Spleen (tissue), 13 donors: ENCODE measurements at regions of chr2 and their contacts with region 1.

Region 1: GRCh38 chr2:177296040-177296439 is 31.5 kb upstream of the NFE2L2 start:
- DNase-seq: no peak
- H3K4me3 ChIP-seq: no peak overlapping the region
- H3K27ac ChIP-seq: no peak overlapping the region
- H3K4me1 ChIP-seq: peaks cover 0 to 12% (median 6%) of the 10 kb centered on the region in 6 donors
- H3K27me3 ChIP-seq: no peaks in the 10 kb centered on the region
- CTCF ChIP-seq: peak in 9 of 11 experiments; percentile 19 to 50 (median 45)
- POLR2A ChIP-seq: no peak

Region 2: DNA sequence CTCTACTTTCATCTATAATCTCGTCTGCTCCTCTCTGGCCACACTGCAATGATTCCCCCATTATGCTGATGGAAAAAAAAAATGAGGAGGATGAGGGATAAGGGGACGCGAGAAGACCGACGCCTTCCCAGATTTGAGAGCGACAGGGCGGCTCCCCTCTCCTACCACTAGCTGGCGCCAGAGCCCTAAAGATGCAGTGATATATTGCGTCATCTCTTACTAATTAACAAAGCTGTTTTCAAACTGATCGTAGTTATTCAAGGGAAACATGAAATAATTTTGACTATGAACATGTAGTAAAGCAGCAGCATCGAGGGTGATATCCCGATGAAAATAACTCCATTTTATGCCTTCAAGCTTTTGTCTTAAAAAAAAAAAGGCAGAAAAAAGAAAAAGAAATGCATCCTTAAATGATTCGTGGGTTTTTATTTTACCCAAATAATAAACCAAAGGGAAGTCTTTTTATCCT is 131.4 kb before region 1 on chr2:
- intact Hi-C with region 1: loop called (anchors 10 kb)
- DNase-seq: peak; percentile 90
- H3K4me3 ChIP-seq: peak overlapping the region; percentile 2 to 56 (median 28)
- H3K27ac ChIP-seq: peak overlapping the region; percentile 65 to 88 (median 86)
- H3K4me1 ChIP-seq: peaks cover 14 to 36% (median 26%) of the 10 kb centered on the region in 6 donors
- H3K27me3 ChIP-seq: no peaks in the 10 kb centered on the region
- CTCF ChIP-seq: peak; percentile 90 to 100 (median 97)
- POLR2A ChIP-seq: no peak